Dorsolateral prefrontal cortex (tissue), 120 donors: ENCODE measurements at regions of chrX and their contacts with region 1.

Region 1: GRCh38 chrX:70030301-70030767 is 19.4 kb downstream of the AWAT2 start:
- DNase-seq: peak in 5 of 10 donors; percentile 9 to 50 (median 16)
- H3K4me3 ChIP-seq: no peak overlapping the region
- H3K27ac ChIP-seq: no peak overlapping the region
- H3K27me3 ChIP-seq: peaks cover 0 to 95% (median 37%) of the 10 kb centered on the region in 45 donors
- CTCF ChIP-seq: peak in 55 of 56 donors; percentile 39 to 80 (median 66)

Region 2: DNA sequence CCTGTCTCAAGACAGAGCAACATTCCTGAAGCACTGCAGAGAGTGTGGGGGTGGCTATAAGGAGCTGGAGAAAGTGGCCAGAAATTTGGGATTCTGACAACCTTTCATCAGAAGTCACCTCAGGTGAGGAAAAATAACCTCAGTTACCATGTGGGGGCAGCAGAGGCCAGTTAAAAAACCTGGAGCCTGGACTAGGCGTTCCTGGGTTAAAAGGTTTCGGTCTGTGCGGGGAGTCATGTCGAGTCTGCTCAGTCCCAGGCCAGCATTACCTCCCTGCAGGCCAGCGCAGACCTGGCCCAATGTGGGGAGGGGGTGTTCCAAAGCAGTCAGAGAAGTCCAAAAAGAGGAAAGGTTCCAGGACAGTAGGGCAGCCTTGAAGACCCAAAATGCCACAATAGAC is 537.1 kb before region 1 on chrX:
- intact Hi-C with region 1: loop called in 1 of 2 experiments (anchors 5 kb)
- DNase-seq: peak in 1 of 10 donors; percentile 21
- H3K4me3 ChIP-seq: no peak overlapping the region
- H3K27ac ChIP-seq: no peak overlapping the region
- H3K27me3 ChIP-seq: peaks cover 0 to 96% (median 56%) of the 10 kb centered on the region in 45 donors
- CTCF ChIP-seq: peak in 53 of 56 donors; percentile 12 to 68 (median 42)

Region 3: GRCh38 chrX:69538321-69538876 is 491.9 kb before region 1 on chrX:
- intact Hi-C with region 1: loop called (anchors 2 to 10 kb)
- DNase-seq: peak in 7 of 10 donors; percentile 24 to 71 (median 55)
- H3K4me3 ChIP-seq: peak overlapping the region in 55 of 59 donors; percentile 19 to 64 (median 46)
- H3K27ac ChIP-seq: peak overlapping the region in 3 of 59 donors; percentile 46 to 68 (median 56)
- H3K27me3 ChIP-seq: peaks cover 0 to 86% (median 36%) of the 10 kb centered on the region in 45 donors
- CTCF ChIP-seq: peak in 55 of 56 donors; percentile 28 to 82 (median 68)